ENCODE measurements at regions of chr3 and their contacts with region 1.

Region 1: DNA sequence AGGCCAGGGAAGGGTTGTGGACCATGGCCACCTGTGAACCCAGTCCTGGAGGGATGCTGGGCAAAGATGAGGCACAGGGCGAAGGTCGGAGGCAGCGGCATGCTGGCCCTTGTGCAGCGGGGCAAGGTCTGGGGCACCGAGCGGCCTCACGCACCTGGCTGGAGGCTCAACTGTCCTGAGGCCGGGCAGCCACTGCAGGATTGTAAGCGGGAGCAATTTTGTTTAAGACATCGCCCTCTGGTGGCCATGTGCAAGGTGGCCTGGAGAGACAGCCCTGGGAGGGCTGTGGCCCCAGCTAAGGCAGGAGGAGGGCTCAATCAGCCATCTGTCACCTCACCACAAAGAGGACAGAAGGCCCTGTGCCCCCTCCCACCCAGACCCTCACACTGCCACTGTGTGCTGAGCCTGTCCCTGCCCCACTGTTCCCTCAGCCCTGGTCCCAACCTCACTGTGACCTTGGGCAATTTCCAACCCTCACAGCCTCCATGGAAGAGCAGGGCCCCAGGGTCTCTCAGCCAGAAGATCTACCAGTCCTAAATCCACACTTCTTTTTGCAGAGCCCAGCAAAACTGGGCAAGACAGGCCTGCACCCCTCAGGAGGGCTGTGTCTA is 46.2 kb downstream of the TPRA1 start:
- DNase-seq: peak; percentile 45 to 80
- H3K4me3 ChIP-seq: no peak overlapping the region
- H3K27ac ChIP-seq: no peak overlapping the region
- H3K4me1 ChIP-seq: peaks cover 4% of the 10 kb centered on the region
- H3K27me3 ChIP-seq: peaks cover 25% of the 10 kb centered on the region
- CTCF ChIP-seq: peak; percentile 85

Region 2: GRCh38 chr3:126432361-126433104 is 1111.8 kb before region 1 on chr3:
- CTCF ChIA-PET with region 1: interaction called, 10 read pairs
- POLR2A ChIA-PET with region 1: no interaction called
- intact Hi-C with region 1: no loop called
- DNase-seq: no peak
- H3K4me3 ChIP-seq: no peak overlapping the region
- H3K27ac ChIP-seq: no peak overlapping the region
- H3K4me1 ChIP-seq: no peaks in the 10 kb centered on the region
- H3K27me3 ChIP-seq: no peaks in the 10 kb centered on the region
- CTCF ChIP-seq: no peak

Region 3: GRCh38 chr3:126679318-126679751 is 865.0 kb before region 1 on chr3:
- CTCF ChIA-PET with region 1: no interaction called
- POLR2A ChIA-PET with region 1: no interaction called
- intact Hi-C with region 1: loop called (anchors 1 kb)
- DNase-seq: peak; percentile 59 to 88
- H3K4me3 ChIP-seq: no peak overlapping the region
- H3K27ac ChIP-seq: no peak overlapping the region
- H3K4me1 ChIP-seq: no peaks in the 10 kb centered on the region
- H3K27me3 ChIP-seq: peaks cover 12% of the 10 kb centered on the region
- CTCF ChIP-seq: peak; percentile 97

Region 4: GRCh38 chr3:127455541-127456450 is 88.5 kb before region 1 on chr3:
- CTCF ChIA-PET with region 1: no interaction called
- POLR2A ChIA-PET with region 1: no interaction called
- intact Hi-C with region 1: loop called (anchors 5 kb)
- DNase-seq: peak in 1 of 2 experiments; percentile 90
- H3K4me3 ChIP-seq: peak overlapping the region; percentile 39; the same call in 1 of the 2 replicates
- H3K27ac ChIP-seq: no peak overlapping the region
- H3K4me1 ChIP-seq: peaks cover 11% of the 10 kb centered on the region
- H3K27me3 ChIP-seq: peaks cover 60% of the 10 kb centered on the region
- CTCF ChIP-seq: peak; percentile 82

Region 5: GRCh38 chr3:127488740-127489398 is 55.4 kb before region 1 on chr3:
- CTCF ChIA-PET with region 1: no interaction called
- POLR2A ChIA-PET with region 1: no interaction called
- intact Hi-C with region 1: no loop called
- DNase-seq: no peak
- H3K4me3 ChIP-seq: no peak overlapping the region
- H3K27ac ChIP-seq: no peak overlapping the region
- H3K4me1 ChIP-seq: no peaks in the 10 kb centered on the region
- H3K27me3 ChIP-seq: peaks cover 46% of the 10 kb centered on the region
- CTCF ChIP-seq: no peak

Region 6: GRCh38 chr3:128316481-128316891 is 772.2 kb after region 1 on chr3:
- CTCF ChIA-PET with region 1: interaction called, 13 read pairs
- POLR2A ChIA-PET with region 1: no interaction called
- intact Hi-C with region 1: no loop called
- DNase-seq: no peak
- H3K4me3 ChIP-seq: no peak overlapping the region
- H3K27ac ChIP-seq: no peak overlapping the region
- H3K4me1 ChIP-seq: no peaks in the 10 kb centered on the region
- H3K27me3 ChIP-seq: no peaks in the 10 kb centered on the region
- CTCF ChIP-seq: no peak